Cardiac septum (tissue), 1 donor: ENCODE measurements at regions of chr5 and their contacts with region 1.

Region 1: DNA sequence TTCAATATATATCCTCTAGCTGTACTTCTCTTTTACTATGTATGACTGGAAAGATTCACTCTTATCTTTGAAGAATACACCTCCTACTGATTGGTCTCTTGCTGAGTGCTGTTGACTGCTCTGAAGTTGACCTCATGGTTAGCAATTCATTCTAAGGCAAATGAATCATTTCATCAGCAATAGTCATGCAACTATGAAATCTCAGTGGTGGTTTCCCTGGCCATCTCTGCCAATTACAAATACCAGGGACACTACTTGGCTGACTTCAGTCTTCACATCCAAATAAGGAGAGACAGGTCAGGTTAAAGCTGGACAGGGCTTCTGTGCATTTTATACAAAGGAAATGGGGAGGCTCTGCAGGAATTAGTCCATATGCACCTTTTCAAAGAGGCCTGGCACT is 333.5 kb upstream of the ACTBL2 start:
- DNase-seq: no peak

Region 2: GRCh38 chr5:57862457-57862911 is 46.4 kb after region 1 on chr5:
- intact Hi-C with region 1: loop called (anchors 5 kb)
- DNase-seq: no peak

Region 3: GRCh38 chr5:57878301-57878722 is 62.2 kb after region 1 on chr5:
- intact Hi-C with region 1: no loop called
- DNase-seq: no peak